Left colon (tissue), 2 donors: ENCODE measurements at regions of chrX and their contacts with region 1.

Region 1: DNA sequence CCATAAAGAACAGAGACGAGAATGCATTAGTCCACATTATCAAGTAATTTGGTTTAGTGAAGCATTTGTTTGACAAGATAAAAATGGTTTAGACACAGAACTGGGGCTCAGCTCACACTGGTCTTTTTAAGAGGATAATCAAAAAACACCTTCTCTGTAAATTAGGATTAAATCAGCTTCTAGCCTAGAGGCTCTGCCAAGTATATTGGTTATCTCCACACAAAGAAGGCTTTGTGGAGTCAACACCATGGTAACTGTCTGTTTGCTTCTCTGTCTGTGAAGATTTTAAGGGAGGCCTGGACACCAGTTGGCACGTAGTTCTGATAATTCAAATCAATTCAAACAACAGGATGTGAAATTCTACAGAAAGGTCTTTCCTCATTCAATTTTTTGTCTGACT is 687.0 kb downstream of the DMD start:
- DNase-seq: no peak
- ATAC-seq: no peak

Region 2: GRCh38 chrX:32041181-32041580 is 483.2 kb before region 1 on chrX:
- intact Hi-C with region 1: no loop called
- DNase-seq: no peak
- ATAC-seq: no peak

Region 3: DNA sequence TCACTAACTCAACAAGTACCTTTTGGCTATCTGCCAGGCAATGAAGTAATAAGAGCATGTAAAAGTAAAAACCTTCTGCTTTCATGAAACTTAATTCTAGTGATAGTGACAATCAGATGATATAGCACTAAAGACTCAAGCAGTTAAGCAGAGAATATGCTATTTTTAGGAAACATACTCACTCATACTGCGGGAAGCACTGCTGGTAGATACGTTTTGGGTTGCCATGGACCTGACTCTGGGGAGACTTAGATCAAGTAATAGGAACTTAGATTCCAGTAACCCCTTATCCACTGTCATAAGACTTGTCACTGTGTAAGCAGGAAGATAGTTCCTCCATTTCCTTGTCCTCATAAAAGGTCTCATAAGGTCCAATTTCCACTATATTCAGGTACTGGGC is 300.6 kb after region 1 on chrX:
- intact Hi-C with region 1: no loop called
- DNase-seq: no peak
- ATAC-seq: no peak

Region 4: DNA sequence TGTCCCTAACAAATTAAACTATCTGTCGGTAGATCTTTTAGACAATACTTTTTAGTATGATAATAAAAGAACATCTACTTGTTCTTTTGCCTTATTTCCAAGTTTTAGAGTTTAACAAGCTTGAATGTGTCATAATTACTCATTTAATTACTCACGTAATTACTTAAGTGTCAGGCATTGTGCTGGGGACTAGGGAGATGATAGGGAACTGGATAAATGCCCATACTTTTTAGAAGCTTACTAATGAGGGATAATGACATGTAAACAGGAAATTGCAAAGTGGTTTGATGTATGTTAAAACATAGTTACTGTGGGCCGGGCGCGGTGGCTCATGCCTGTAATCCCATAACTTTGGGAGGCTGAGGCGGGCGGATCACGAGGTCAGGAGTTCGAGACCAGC is 528.6 kb after region 1 on chrX:
- intact Hi-C with region 1: no loop called
- DNase-seq: no peak
- ATAC-seq: no peak

Region 5: DNA sequence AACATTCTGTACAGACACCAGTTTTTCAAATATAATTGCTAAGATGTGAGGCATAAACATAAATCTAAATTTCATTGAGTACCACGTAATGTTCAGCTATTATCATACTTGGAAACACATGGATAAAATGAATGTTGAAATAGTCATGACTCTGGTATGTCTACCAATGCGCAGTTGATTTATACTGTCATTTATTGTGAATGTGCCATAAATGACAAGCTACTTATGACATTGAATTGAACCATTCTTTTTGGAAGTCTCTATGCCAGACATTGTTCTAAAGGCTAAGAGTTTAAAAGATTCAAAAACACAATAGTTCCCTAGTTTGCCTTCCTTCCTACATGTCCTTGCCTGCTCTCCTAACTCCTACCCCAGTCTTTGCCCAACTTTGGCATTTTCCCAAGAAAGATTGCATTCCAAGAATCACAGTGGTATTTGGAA is 783.5 kb after region 1 on chrX:
- intact Hi-C with region 1: loop called in 1 of 2 experiments (anchors 5 kb)
- DNase-seq: no peak
- ATAC-seq: no peak

Region 6: DNA sequence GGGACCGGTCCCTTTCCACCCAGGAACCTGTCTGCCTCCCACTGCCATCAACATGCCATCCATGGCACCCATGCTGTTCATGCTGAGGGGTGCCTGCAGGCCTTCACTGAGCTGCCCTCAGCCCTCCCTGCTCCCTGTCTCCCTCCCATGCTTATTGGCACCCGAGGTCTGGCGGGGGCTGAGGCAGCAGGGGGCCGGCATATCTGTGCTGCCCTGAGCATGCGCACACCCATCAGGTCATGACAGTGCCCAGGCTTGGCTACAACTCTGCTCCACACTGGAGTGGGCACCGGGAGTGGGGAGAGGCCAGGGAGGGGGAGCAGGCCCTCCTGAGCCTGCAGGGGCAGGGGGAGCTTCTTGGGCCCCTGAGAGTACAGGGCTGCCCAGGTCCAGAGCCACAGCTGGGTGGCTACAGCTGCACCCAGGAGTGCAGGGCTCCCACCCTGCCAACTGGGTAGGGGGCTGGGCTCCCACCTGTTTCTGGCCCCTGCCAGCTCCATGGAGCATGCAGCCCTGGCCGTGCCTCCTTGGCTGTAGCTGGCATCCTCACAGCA is 1082.7 kb after region 1 on chrX:
- intact Hi-C with region 1: no loop called
- DNase-seq: no peak
- ATAC-seq: no peak